ENCODE measurements at regions of chr4 and their contacts with region 1.

Region 1: DNA sequence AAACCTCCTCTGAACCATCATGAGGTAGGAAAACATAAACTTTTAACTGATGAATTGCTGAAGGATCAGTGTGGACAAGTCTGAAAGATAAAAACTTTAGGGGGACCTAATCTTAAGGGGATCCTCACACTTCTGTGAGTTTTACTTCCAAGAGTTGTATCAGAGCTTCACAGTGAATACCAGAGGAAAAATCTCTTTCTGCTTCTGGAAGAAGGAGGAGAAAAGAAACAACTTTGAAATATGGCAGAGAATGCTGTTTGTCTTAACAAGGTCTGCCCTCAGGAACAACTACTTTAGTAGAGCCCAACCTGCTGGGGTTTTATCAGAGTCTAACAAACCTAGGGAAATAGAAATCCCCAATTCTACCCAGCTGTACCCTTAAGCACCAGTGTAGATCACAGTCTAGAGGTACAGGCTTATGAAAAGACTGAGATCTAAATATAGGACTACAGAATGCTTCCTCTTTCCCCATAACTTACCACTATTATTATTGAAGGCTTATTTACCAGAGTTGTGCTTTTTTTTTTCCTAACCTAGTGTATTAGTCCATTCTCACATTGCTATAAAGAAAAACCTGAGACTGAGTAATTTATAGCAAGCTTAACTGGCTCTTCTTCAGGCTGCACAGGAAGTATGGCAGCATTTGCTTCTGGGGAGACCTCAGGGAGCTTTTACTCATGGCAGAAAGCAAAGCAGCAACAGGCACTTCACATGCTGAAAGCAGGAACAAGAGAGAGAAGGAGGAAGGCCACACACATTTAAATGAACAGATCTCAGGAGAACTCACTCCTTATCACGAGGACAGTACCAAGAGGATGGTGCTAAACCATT is 167.9 kb downstream of the CAMK2D start:
- DNase-seq: no peak
- H3K4me3 ChIP-seq: no peak overlapping the region
- CTCF ChIP-seq: no peak

Region 2: GRCh38 chr4:113539408-113539807 is 54.2 kb before region 1 on chr4:
- in situ Hi-C with region 1: no loop called
- DNase-seq: peak; percentile 11
- H3K4me3 ChIP-seq: no peak overlapping the region
- CTCF ChIP-seq: no peak

Region 3: DNA sequence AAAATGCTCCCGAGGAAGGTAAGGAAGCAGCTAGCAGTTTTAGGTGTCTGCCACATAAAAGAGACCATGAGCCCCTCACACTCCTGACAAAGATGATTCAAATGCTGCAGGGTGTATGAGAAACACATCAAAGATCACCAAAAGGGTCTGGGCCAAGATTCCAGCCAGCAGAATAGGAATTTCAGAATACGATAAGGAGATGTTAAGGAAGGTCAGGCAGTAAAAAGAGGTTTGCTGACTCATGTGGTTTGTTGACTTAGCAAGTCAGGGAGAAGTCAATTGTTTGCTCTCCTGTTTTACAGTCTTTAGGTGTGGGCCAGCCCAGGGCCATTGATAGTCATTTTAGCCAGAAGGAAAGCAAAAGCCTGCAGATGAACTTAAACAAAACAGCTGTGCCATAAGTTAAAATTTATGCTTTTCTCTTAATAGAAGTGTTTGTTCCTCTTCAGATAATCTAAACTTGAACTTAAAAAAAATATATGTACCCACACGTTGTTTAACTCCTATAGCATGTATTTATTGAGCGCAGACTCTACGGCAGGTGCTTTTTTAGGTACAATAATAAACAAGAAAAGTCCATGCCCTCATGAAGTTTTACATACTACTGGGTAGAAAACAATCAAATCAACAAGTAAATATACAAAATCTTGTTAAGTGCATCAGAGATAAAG is 52.3 kb after region 1 on chr4:
- in situ Hi-C with region 1: loop called (anchors 5 kb)
- DNase-seq: peak; percentile 35
- H3K4me3 ChIP-seq: no peak overlapping the region
- CTCF ChIP-seq: no peak

Region 4: DNA sequence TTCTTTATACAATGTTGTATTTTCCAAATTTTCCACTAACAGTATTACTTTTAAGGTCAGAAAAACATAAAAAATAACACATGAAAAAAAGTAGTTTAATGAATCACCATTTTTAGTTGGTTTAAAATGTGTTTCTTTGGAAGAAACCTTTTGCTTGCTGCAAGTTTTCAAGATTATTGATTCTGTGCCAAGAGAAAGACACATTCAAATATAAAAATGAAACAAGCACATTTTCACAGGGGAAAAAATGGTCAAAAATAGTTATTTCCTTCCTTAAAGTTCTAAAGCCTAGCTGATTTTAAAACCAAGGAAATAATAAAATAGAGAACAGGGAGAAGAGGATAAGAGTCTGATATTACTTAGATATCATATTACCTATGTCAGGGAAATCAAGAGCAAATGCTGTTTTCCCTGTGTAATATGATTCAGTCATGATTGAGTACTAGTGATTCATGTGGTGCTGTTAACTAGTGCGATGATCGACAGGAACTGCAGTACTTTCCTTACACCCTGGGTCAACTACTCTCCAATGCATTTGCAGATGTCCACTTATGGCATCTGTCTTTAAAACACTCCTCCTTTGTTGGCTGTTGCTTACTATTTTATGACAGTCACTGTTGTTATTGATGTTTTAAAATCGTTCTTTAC is 64.1 kb after region 1 on chr4:
- in situ Hi-C with region 1: no loop called
- DNase-seq: no peak
- H3K4me3 ChIP-seq: no peak overlapping the region
- CTCF ChIP-seq: no peak

Region 5: GRCh38 chr4:113673450-113673849 is 79.8 kb after region 1 on chr4:
- in situ Hi-C with region 1: no loop called
- DNase-seq: no peak
- H3K4me3 ChIP-seq: no peak overlapping the region
- CTCF ChIP-seq: peak; percentile 2